ENCODE measurements at regions of chr19 and their contacts with region 1.

Region 1: DNA sequence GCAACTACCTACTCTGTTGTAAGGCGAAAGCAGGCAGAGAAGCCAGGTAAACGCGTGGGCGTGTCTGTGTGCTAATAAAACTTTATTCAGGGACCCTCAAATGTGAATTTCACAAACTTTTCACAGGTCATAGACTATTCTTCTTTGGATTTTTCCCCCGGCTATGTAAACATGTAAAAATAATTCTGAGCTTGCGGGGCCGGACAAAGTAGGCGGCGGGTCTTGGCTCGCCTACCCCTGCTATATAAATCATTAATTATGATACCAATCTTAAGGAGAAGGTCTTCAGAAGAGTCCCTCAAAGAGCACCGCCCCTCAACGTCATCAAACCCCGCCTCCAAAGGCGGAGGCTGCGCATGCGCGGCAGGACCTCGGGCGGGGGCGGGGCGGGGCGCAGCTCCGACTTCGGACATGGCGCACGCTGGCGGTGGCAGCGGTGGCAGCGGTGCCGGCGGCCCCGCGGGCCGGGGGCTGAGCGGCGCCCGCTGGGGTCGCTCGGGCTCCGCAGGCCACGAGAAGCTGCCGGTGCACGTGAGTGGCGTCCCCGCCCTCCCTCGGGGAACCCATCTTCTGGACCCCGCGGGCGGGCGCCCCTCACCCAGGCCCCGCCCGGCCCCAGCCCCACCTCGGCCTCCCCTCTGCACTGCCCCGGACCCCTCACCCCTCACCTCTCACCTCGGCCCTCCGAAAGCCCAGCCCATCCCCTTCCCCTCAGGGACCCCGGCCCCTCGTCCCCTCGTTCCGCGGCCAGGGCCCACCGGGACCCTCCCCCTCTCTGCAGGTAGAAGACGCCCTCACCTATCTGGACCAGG is at the start of gene SIN3B:
- DNase-seq: peak; percentile 95
- H3K4me3 ChIP-seq: peak within 1 kb of the TSS; percentile 88 to 96 (median 94)
- H3K27ac ChIP-seq: peak within 1 kb of the TSS; percentile 81 to 89 (median 87)
- H3K4me1 ChIP-seq: peaks cover 29 to 51% (median 40%) of the 10 kb centered on the region in 4 donors
- H3K27me3 ChIP-seq: no peaks in the 10 kb centered on the region
- CTCF ChIP-seq: peak in 1 of 3 experiments; percentile 16
- EP300 ChIP-seq: no peak
- POLR2A ChIP-seq: peak; percentile 19
- total RNA-seq, gene SIN3B: 25.3 to 53.9 (median 36.1) TPM

Region 2: GRCh38 chr19:16714702-16715287 is 114.4 kb before region 1 on chr19:
- intact Hi-C with region 1: loop called (anchors 10 kb)
- DNase-seq: no peak
- H3K4me3 ChIP-seq: no peak overlapping the region
- H3K27ac ChIP-seq: no peak overlapping the region
- H3K4me1 ChIP-seq: peaks cover 0 to 10% (median 7%) of the 10 kb centered on the region in 4 donors
- H3K27me3 ChIP-seq: no peaks in the 10 kb centered on the region
- CTCF ChIP-seq: peak; percentile 72 to 86 (median 79)
- EP300 ChIP-seq: no peak
- POLR2A ChIP-seq: no peak

Region 3: GRCh38 chr19:16791960-16792359 is 37.3 kb before region 1 on chr19:
- intact Hi-C with region 1: no loop called
- DNase-seq: no peak
- H3K4me3 ChIP-seq: no peak overlapping the region
- H3K27ac ChIP-seq: no peak overlapping the region
- H3K4me1 ChIP-seq: no peaks in the 10 kb centered on the region
- H3K27me3 ChIP-seq: no peaks in the 10 kb centered on the region
- CTCF ChIP-seq: no peak
- EP300 ChIP-seq: no peak
- POLR2A ChIP-seq: no peak

Region 4: GRCh38 chr19:16976441-16976840 is 147.2 kb after region 1 on chr19:
- intact Hi-C with region 1: no loop called
- DNase-seq: no peak
- H3K4me3 ChIP-seq: no peak overlapping the region
- H3K27ac ChIP-seq: no peak overlapping the region
- H3K4me1 ChIP-seq: no peaks in the 10 kb centered on the region
- H3K27me3 ChIP-seq: peaks cover 0 to 20% (median 0%) of the 10 kb centered on the region in 4 donors
- CTCF ChIP-seq: no peak
- EP300 ChIP-seq: no peak
- POLR2A ChIP-seq: no peak